Endothelial cell of umbilical vein (primary cell): ENCODE measurements at regions of chr11 and their contacts with region 1.

Region 1: DNA sequence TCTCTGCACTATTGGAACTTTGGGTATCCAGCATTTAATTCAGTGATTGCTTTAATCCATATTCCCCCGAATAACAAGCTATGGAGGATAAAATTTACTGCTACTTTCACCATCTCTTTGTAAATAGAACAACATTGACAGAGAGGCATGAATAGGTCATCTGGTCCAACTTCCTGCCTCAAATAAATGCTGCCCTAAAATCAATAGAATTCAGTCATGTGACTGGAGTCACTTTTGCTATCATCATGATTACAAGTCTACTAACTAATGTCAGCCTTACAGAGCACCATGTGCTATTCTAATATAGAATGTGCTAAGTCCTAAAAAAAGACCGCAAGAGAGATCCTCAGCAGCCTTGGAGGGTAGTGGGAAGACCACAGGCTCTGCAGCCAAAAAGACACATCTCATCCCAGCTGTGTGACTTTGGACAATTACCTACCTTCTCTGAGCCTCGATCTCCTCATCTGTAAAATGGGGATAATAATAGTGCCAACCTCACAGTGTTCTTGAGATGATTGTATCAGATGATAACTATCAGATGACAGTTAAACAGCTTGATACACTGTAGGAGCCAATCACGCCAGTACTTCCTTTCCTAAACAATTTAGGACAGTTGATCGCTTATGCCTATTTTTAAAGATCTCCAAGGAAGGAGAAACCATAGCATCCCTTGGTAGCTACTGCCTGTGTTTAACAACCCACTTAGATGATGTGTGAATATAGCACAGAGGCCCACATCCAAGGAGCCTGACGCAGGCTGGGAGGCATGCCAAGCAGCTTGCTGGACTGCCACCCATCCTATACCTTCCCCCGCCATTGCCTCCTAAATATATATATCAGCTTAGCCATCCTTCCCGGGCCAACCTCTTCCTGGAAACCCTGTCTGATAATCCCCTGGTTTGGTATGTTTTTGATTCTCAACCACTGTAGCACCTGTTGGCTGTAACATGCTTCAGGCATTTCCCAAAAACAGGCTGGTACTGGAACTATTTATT is 77.3 kb upstream of the PHF21A start:
- DNase-seq: no peak
- H3K4me3 ChIP-seq: no peak overlapping the region
- H3K27ac ChIP-seq: no peak overlapping the region
- H3K4me1 ChIP-seq: peaks cover 3% of the 10 kb centered on the region
- H3K27me3 ChIP-seq: peaks cover 12 to 13% of the 10 kb centered on the region in 2 experiments
- CTCF ChIP-seq: no peak
- POLR2A ChIP-seq: no peak

Region 2: DNA sequence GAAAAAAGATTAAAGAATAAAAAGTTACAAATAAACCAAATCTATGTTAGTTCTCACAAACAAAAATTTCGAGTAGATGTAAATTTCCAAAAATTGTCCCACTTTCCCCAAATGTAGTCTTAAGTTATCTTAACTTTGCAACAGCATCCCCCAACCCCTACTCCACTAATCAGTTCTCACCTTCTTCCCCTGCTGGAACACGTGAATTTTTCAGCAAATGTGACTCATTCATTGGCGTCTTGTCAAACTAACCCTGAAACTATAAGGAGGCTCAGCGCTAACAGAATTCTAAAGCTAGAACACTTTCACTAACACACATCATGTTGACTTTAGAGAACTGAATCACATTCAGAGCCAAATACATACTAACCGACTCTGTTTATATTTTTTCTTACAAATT is 123.4 kb before region 1 on chr11:
- CTCF ChIA-PET with region 1: no interaction called
- POLR2A ChIA-PET with region 1: no interaction called
- dilution Hi-C with region 1: no loop called
- intact Hi-C with region 1: loop called (anchors 10 kb)
- DNase-seq: peak; percentile 82
- H3K4me3 ChIP-seq: no peak overlapping the region
- H3K27ac ChIP-seq: no peak overlapping the region
- H3K4me1 ChIP-seq: no peaks in the 10 kb centered on the region
- H3K27me3 ChIP-seq: no peaks in the 10 kb centered on the region
- CTCF ChIP-seq: no peak
- POLR2A ChIP-seq: no peak

Region 3: GRCh38 chr11:46380340-46381047 is 182.0 kb after region 1 on chr11:
- CTCF ChIA-PET with region 1: no interaction called
- POLR2A ChIA-PET with region 1: no interaction called
- dilution Hi-C with region 1: no loop called
- intact Hi-C with region 1: no loop called
- DNase-seq: peak; percentile 67
- H3K4me3 ChIP-seq: peak overlapping the region; percentile 62 to 84 (median 72)
- H3K27ac ChIP-seq: peak overlapping the region; percentile 61
- H3K4me1 ChIP-seq: peaks cover 11% of the 10 kb centered on the region
- H3K27me3 ChIP-seq: no peaks in the 10 kb centered on the region
- CTCF ChIP-seq: no peak
- POLR2A ChIP-seq: no peak